MCF 10A (cell line): ENCODE measurements at regions of chr4 and their contacts with region 1.

Region 1: DNA sequence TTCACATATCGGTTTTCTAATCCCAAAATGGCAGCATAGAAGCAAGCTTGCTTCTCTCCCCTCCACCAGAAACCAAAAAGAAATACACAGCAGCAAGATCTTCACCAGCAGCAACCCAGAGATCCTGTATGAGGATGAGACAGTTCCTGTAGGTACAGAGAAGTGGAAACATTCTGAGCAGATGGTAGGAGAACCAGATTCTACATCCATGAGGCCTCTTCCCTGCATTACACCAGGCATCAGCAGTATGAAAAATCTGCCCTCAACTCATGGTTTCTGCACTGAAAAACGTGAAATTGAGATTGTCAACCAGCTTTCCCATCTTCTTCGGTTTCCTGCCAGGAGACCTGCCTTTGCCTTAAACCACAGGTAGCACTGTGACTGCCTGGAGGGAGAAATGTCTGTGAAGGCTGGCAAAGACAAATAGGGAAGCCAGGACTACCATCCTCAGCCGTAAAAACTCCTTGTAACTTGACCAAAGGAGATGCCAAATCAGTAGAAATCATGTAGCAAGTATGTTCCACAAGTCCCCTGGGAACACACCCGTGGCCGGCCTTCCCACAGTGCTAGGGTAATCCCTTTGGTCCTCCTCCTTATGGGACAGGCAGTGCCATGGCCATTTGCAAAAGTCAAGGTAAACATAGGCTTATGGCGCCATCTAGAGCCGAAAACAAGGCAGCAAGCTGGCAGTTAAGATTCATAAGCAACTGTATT is 24.0 kb upstream of the MTHFD2L start:
- DNase-seq: peak; percentile 88
- H3K4me3 Mint-ChIP-seq: no peak overlapping the region
- H3K27ac Mint-ChIP-seq: peak overlapping the region; percentile 44
- H3K4me1 Mint-ChIP-seq: peaks cover 14% of the 10 kb centered on the region
- H3K27me3 Mint-ChIP-seq: no peaks in the 10 kb centered on the region
- CTCF ChIP-seq: peak; percentile 68

Region 2: GRCh38 chr4:73593631-73594241 is 540.2 kb before region 1 on chr4:
- CTCF ChIA-PET with region 1: no interaction called
- POLR2A ChIA-PET with region 1: no interaction called
- intact Hi-C with region 1: loop called (anchors 10 kb)
- DNase-seq: peak; percentile 51
- H3K4me3 Mint-ChIP-seq: no peak overlapping the region
- H3K27ac Mint-ChIP-seq: no peak overlapping the region
- H3K4me1 Mint-ChIP-seq: peaks cover 18% of the 10 kb centered on the region
- H3K27me3 Mint-ChIP-seq: no peaks in the 10 kb centered on the region
- CTCF ChIP-seq: peak; percentile 38

Region 3: DNA sequence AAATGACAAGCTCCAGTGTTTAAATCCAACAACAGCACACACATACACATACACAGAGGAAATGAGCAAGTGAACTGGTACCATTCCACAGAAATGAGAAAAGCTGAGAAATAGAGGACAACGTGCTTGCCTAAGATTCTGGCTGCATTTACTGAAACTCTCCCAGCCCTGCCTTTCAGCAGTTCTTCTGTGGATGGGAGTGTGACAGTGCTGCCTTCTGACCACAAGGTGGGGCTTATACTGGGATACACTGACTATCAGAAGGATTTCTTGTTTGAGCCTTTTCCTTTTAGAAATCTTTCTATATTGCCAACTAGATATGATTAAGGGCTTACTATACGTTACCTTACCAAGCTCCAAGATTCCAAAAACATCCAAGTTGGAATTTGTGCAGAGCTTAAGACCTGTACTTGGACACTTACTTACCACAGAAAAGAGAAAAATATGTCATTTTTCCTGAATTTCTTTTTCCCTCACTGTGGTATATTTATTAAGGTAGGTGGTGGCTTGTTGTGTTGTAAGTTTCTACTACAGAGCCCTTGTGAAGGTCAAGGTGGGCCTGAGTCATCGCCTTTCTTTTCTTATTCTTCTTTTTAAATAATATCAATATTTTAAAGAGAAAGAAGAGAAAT is 404.3 kb before region 1 on chr4:
- CTCF ChIA-PET with region 1: interaction called, 7 read pairs
- POLR2A ChIA-PET with region 1: no interaction called
- intact Hi-C with region 1: loop called (anchors 1 kb)
- DNase-seq: peak; percentile 81
- H3K4me3 Mint-ChIP-seq: no peak overlapping the region
- H3K27ac Mint-ChIP-seq: no peak overlapping the region
- H3K4me1 Mint-ChIP-seq: peaks cover 42% of the 10 kb centered on the region
- H3K27me3 Mint-ChIP-seq: no peaks in the 10 kb centered on the region
- CTCF ChIP-seq: peak; percentile 72

Region 4: DNA sequence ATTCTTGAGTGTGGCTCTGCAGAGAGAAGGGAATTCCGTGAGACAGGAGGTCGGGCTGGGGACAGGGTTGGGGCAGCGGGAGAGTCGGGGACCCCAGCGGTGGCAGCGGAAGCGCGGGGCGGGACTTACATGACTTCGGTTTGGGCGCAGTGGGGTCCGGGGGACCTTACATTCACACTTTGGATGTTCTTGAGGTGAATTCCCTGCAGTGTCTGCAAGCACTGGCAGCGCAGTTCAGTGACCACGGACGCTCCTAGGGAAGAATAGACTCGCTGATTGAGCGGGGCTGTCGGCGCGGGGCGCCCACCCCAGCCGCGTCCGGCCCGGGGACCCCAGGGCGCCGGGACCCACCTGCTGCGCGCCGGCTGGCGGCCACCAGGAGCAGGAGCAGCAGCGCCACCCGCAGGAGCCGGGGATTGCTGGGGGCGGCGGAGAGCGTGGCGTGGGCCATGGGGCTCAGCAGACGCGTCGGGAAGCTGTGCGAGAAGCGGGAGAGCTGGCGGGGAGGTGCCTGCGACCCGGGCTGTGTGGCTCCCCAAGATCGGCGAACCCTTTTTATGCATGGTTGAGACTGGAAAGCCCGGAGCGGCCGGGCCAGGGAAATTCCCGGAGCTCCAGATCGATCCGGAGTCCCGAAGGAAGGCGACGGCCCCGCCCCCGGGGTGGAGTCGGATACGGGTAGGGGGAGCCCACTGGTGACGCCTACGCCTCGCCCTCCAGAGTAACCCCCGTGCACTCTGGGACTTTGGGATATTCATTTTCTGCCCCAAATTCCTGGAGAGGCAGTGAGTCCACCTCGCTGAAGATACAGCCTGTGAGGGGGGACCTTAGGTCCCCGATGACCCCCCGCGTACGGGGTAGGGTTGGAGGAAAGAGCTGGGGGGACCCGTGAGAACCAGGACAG is 95.5 kb before region 1 on chr4 and contains the start of gene CXCL3:
- CTCF ChIA-PET with region 1: interaction called, 5 read pairs
- POLR2A ChIA-PET with region 1: interaction called, 3 read pairs
- intact Hi-C with region 1: loop called (anchors 5 kb)
- DNase-seq: peak; percentile 64
- H3K4me3 Mint-ChIP-seq: peak within 1 kb of the TSS; percentile 86
- H3K27ac Mint-ChIP-seq: peak within 1 kb of the TSS; percentile 81
- H3K4me1 Mint-ChIP-seq: peaks cover 37% of the 10 kb centered on the region
- H3K27me3 Mint-ChIP-seq: no peaks in the 10 kb centered on the region
- CTCF ChIP-seq: peak; percentile 40
- total RNA-seq, gene CXCL3: 9.2 and 9.8 TPM in 2 replicates

Region 5: GRCh38 chr4:74117024-74117534 is 16.9 kb before region 1 on chr4:
- CTCF ChIA-PET with region 1: interaction called, 39 read pairs
- POLR2A ChIA-PET with region 1: interaction called, 92 read pairs
- intact Hi-C with region 1: no loop called
- DNase-seq: peak; percentile 96
- H3K4me3 Mint-ChIP-seq: peak overlapping the region; percentile 88
- H3K27ac Mint-ChIP-seq: peak overlapping the region; percentile 99
- H3K4me1 Mint-ChIP-seq: peaks cover 44% of the 10 kb centered on the region
- H3K27me3 Mint-ChIP-seq: no peaks in the 10 kb centered on the region
- CTCF ChIP-seq: no peak

Region 6: DNA sequence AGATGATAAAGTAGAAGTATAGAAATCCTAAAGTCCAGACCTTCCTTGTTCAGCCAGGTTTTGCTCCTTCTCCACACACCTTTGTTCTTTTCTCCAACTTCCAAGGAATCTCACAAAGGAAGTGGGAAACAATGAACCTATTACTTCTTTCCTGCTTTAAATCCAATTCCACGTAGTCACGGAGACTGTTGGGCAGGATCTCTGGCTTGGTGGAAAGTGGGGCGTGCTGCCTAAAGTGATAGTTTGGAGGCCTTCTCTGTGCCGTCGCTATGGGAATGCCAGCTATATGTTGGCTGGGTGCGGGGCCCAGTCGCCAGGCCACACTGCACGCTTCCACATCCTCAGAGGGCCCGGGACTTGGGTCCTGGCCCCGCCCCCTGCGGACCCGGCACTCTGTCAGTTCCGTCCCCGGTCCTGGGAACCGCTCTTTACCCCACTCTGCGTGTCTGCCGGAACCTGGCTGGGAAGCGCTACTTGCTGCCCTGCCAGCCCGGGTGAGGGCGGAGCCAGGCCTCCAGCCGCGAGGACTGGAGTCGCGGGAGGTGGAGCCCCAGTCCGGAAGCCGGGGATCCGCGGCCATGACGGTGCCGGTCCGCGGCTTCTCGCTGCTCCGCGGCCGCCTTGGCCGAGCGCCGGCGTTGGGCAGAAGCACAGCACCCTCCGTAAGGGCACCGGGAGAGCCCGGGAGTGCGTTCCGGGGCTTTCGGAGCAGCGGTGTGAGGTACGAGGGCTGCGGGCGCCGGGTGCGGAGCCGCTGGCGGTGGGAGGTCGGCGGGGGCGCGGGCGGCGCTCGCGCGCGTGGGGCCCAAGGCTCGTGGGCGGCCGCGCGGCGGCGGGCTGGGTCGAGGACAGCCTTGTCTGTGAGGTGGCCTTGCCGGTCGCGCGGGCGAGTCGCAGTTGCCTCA is 23.9 kb after region 1 on chr4 and contains the start of gene MTHFD2L:
- CTCF ChIA-PET with region 1: interaction called, 14 read pairs
- POLR2A ChIA-PET with region 1: interaction called, 12 read pairs
- intact Hi-C with region 1: no loop called
- DNase-seq: peak; percentile 95
- H3K4me3 Mint-ChIP-seq: peak within 1 kb of the TSS; percentile 91
- H3K27ac Mint-ChIP-seq: peak within 1 kb of the TSS; percentile 94
- H3K4me1 Mint-ChIP-seq: peaks cover 33% of the 10 kb centered on the region
- H3K27me3 Mint-ChIP-seq: no peaks in the 10 kb centered on the region
- CTCF ChIP-seq: no peak
- total RNA-seq, gene MTHFD2L: 110 and 113 TPM in 2 replicates